Mammary epithelial cell (primary cell): ENCODE measurements at regions of chr1 and their contacts with region 1.

Region 1: GRCh38 chr1:219990782-219991510 is 55.4 kb downstream of the EPRS1 start:
- DNase-seq: peak; percentile 23
- H3K4me3 ChIP-seq: no peak overlapping the region
- H3K27ac ChIP-seq: no peak overlapping the region
- H3K4me1 ChIP-seq: no peaks in the 10 kb centered on the region
- H3K27me3 ChIP-seq: no peaks in the 10 kb centered on the region
- CTCF ChIP-seq: peak; percentile 51 to 58

Region 2: DNA sequence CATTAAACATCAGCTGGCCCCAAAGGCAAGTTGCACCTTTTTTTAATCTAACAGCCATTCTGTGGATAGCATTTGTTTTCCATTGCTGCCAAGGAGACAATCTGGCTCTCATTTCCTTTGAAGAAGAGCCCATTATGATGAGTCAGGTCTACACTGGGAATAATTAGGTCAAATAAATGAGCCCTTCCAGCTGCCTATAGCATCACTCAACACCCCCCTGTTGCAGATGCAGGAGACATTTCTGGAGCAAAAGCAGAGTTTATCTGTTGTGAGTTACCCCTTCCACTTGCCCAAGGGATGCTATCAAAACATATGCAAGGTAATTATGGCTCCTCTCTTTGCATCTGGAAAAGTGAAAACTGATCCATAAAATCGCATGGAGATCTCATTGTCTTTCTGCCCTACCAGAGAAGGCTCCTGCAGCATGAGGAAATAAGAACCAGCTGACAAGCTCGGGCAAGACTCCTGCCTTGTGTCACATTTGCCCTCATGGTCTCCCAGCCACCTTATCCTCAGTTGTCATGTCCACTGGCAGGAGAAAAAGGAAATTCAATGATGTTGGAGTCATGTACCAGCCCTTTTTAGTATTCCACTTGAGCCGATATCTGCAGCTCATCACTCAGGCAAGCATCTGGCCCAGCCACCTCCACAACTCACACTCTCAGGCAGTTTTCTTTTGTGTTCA is 198.5 kb before region 1 on chr1:
- CTCF ChIA-PET with region 1: no interaction called
- dilution Hi-C with region 1: no loop called
- in situ Hi-C with region 1: no loop called
- intact Hi-C with region 1: no loop called
- DNase-seq: no peak
- H3K4me3 ChIP-seq: no peak overlapping the region
- H3K27ac ChIP-seq: no peak overlapping the region
- H3K4me1 ChIP-seq: no peaks in the 10 kb centered on the region
- H3K27me3 ChIP-seq: no peaks in the 10 kb centered on the region
- CTCF ChIP-seq: no peak

Region 3: GRCh38 chr1:219858980-219859379 is 132.0 kb before region 1 on chr1:
- CTCF ChIA-PET with region 1: interaction called, 10 read pairs
- dilution Hi-C with region 1: no loop called
- in situ Hi-C with region 1: no loop called
- intact Hi-C with region 1: no loop called
- DNase-seq: no peak
- H3K4me3 ChIP-seq: no peak overlapping the region
- H3K27ac ChIP-seq: no peak overlapping the region
- H3K4me1 ChIP-seq: no peaks in the 10 kb centered on the region
- H3K27me3 ChIP-seq: no peaks in the 10 kb centered on the region
- CTCF ChIP-seq: no peak

Region 4: DNA sequence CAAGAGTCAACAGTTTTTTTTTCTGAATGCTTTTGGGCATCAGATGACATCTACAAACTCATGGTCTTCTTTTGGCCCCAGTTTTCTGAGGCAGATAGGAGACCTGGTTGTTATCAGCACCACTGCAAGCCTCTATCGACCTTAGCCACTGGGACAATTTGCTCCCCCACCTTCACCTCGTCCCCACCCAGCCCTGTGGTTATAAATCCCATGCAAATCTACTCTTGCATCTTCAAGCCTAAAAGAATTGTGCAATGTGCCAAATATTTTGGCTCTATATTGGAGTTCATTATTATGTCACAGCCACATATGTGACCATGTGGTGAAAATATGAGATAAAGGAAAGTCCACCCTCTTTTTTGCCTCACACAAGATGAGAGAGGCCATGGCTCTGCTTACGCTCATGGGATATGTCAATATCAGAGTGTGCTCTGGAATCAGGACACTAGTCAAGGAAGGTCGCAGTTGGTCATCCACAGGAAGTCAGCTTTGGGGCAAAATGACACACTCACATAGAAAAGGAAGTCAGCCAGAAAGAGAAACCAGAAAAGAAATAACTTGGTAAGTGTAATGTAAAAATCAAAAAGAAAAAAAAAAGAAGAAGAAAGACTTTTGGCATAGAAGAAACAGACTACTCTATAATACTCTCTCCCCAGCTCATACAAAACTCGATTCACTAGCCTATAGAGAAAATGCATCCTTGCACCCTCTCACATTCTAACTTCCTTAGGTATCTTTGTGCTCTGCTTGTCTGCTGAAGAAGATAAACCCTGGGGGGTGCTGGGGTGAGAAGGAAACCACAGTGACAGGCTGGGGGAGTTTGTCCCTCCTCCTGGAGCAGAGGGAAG is 83.8 kb before region 1 on chr1:
- CTCF ChIA-PET with region 1: no interaction called
- dilution Hi-C with region 1: no loop called
- in situ Hi-C with region 1: no loop called
- intact Hi-C with region 1: no loop called
- DNase-seq: no peak
- H3K4me3 ChIP-seq: no peak overlapping the region
- H3K27ac ChIP-seq: no peak overlapping the region
- H3K4me1 ChIP-seq: no peaks in the 10 kb centered on the region
- H3K27me3 ChIP-seq: no peaks in the 10 kb centered on the region
- CTCF ChIP-seq: no peak

Region 5: DNA sequence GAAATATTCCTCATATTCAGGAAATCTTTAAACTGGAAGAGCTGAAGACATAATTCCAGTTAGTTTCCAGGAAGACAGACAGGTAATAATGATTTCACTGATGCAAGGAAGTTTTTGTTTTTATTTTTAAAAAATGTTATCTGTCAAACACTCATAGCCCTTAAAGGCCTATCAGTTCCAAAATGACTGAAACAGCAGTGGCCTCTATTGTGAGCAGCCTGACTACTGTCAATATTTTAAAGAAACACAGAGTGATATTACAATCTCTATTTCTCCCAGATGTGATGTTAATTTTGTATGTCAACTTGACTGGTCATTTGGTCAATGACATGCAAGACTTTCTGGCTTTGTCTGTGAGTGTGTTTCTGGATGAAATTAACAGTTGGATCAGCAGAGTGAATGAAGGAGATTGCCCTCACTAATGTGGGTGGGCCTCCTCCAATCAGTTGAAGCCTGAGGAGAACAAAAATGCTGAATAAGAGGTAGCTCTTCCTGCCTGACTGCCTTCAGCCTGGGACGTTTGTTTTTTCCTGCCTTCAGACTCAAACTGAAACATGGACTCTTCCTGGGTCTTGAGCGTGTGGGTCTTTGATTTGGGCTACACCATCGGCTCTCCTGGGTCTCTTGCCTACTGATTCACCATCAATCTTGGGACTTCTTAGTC is 31.3 kb before region 1 on chr1:
- CTCF ChIA-PET with region 1: no interaction called
- dilution Hi-C with region 1: no loop called
- in situ Hi-C with region 1: no loop called
- intact Hi-C with region 1: no loop called
- DNase-seq: no peak
- H3K4me3 ChIP-seq: no peak overlapping the region
- H3K27ac ChIP-seq: no peak overlapping the region
- H3K4me1 ChIP-seq: no peaks in the 10 kb centered on the region
- H3K27me3 ChIP-seq: peaks cover 2% of the 10 kb centered on the region
- CTCF ChIP-seq: no peak

Region 6: DNA sequence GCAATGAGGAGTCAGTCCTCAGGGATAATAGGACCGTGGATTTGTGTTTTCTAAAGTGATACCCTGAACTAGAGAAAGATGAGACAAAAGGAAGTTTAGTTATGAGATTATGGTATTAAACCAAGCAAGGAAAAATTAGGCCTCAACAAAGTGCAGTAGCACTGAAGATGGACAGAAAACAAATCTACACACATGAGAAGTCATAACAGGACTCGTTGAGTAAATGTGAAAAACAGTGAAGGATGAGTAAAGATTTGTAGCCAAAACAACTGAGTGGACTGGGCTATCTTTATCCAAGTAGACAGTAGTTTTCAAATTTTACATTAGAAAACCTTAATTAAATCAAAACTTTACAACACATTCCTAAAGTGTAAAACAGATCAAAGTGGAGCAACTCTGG is 40.3 kb after region 1 on chr1:
- CTCF ChIA-PET with region 1: no interaction called
- dilution Hi-C with region 1: no loop called
- in situ Hi-C with region 1: no loop called
- intact Hi-C with region 1: loop called (anchors 10 kb)
- DNase-seq: no peak
- H3K4me3 ChIP-seq: no peak overlapping the region
- H3K27ac ChIP-seq: no peak overlapping the region
- H3K4me1 ChIP-seq: no peaks in the 10 kb centered on the region
- H3K27me3 ChIP-seq: no peaks in the 10 kb centered on the region
- CTCF ChIP-seq: no peak

Region 7: DNA sequence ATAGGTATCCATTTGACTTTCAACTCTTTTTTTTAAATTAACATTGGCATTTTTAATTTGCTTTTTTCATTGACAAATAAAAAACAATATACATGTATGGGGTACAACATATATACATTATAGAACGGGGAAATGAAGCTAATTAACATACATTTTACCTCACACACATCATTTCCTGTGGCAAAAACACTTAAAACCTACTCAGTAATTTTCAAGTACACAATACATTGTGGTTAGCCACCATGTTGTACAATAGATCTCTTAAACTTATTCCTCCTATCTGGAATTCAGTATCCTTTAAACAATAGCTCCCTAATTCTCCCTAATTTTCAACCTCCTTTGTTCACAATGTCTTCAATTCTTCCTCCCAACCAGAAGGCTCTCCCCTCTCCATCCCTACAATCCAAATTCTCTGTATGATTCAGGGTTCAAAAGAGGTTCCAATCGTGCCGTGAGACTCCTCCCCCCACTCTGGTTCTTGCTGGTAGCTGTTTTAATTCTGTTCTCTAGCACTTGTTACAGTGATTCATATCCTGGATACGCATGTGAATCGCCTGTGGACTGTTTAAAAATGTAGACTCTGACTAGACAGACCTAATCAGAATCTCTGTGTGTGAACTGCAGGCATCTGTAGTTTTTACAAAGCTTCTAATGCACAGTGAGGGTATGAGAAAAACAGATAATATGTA is 1838.5 kb after region 1 on chr1:
- CTCF ChIA-PET with region 1: interaction called, 10 read pairs
- dilution Hi-C with region 1: no loop called
- in situ Hi-C with region 1: no loop called
- intact Hi-C with region 1: no loop called
- DNase-seq: peak; percentile 96
- H3K4me3 ChIP-seq: no peak overlapping the region
- H3K27ac ChIP-seq: peak overlapping the region; percentile 91
- H3K4me1 ChIP-seq: peaks cover 74% of the 10 kb centered on the region
- H3K27me3 ChIP-seq: no peaks in the 10 kb centered on the region
- CTCF ChIP-seq: no peak